ENCODE measurements at regions of chr5 and their contacts with region 1.

Region 1: GRCh38 chr5:157204765-157205164 is 24.1 kb downstream of the ITK start:
- DNase-seq: peak in 1 of 5 donors; percentile 76
- H3K4me3 ChIP-seq: peak overlapping the region; percentile 2
- H3K4me3 Mint-ChIP-seq: peak overlapping the region; percentile 48 to 72 (median 69)
- H3K27ac ChIP-seq: peak overlapping the region; percentile 45
- H3K27ac Mint-ChIP-seq: peak overlapping the region; percentile 78 to 96 (median 87)
- H3K4me1 ChIP-seq: peaks cover 95% of the 10 kb centered on the region
- H3K4me1 Mint-ChIP-seq: peaks cover 71 to 95% (median 94%) of the 10 kb centered on the region in 3 donors
- H3K27me3 ChIP-seq: no peaks in the 10 kb centered on the region
- H3K27me3 Mint-ChIP-seq: peaks cover 0 to 3% of the 10 kb centered on the region in 2 donors

Region 2: GRCh38 chr5:157180374-157181264 is 24.1 kb before region 1 on chr5 and contains the start of gene ITK:
- CTCF ChIA-PET with region 1: interaction called, 4 read pairs
- POLR2A ChIA-PET with region 1: interaction called, 14 read pairs
- DNase-seq: peak in 4 of 5 donors; percentile 25 to 80 (median 73)
- H3K4me3 ChIP-seq: peak within 1 kb of the TSS; percentile 84
- H3K4me3 Mint-ChIP-seq: peak within 1 kb of the TSS; percentile 93 to 100 (median 97)
- H3K27ac ChIP-seq: peak within 1 kb of the TSS; percentile 79
- H3K27ac Mint-ChIP-seq: peak within 1 kb of the TSS; percentile 87 to 99 (median 97)
- H3K4me1 ChIP-seq: peaks cover 45% of the 10 kb centered on the region
- H3K4me1 Mint-ChIP-seq: peaks cover 54 to 64% (median 55%) of the 10 kb centered on the region in 3 donors
- H3K27me3 ChIP-seq: no peaks in the 10 kb centered on the region
- H3K27me3 Mint-ChIP-seq: no peaks in the 10 kb centered on the region
- total RNA-seq, gene ITK: 150 to 162 TPM

Region 3: DNA sequence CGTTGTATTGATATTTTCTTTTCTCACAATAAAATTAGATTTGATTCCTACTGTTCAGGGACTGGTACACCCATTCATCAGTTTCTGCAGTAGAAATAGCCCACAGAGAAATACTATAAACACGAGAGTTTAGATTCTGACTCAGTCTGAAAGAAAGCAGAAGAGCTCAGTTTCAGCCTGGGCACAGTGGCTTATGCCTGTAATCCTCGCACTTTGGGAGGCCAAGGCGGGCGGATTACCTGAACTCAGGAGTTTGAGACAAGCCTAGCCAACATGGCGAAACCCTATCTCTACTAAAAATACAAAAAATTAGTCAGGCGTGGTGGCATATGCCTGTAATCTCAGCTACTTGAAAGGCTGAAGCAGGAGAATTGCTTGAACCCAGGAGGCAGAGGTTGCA is 15.5 kb before region 1 on chr5:
- CTCF ChIA-PET with region 1: interaction called, 11 read pairs
- POLR2A ChIA-PET with region 1: interaction called, 27 read pairs
- DNase-seq: no peak
- H3K4me3 ChIP-seq: peak overlapping the region; percentile 44
- H3K4me3 Mint-ChIP-seq: peak overlapping the region; percentile 84 to 100 (median 97)
- H3K27ac ChIP-seq: no peak overlapping the region
- H3K27ac Mint-ChIP-seq: peak overlapping the region; percentile 79 to 97 (median 92)
- H3K4me1 ChIP-seq: peaks cover 88% of the 10 kb centered on the region
- H3K4me1 Mint-ChIP-seq: peaks cover 86 to 96% (median 92%) of the 10 kb centered on the region in 3 donors
- H3K27me3 ChIP-seq: no peaks in the 10 kb centered on the region
- H3K27me3 Mint-ChIP-seq: no peaks in the 10 kb centered on the region

Region 4: DNA sequence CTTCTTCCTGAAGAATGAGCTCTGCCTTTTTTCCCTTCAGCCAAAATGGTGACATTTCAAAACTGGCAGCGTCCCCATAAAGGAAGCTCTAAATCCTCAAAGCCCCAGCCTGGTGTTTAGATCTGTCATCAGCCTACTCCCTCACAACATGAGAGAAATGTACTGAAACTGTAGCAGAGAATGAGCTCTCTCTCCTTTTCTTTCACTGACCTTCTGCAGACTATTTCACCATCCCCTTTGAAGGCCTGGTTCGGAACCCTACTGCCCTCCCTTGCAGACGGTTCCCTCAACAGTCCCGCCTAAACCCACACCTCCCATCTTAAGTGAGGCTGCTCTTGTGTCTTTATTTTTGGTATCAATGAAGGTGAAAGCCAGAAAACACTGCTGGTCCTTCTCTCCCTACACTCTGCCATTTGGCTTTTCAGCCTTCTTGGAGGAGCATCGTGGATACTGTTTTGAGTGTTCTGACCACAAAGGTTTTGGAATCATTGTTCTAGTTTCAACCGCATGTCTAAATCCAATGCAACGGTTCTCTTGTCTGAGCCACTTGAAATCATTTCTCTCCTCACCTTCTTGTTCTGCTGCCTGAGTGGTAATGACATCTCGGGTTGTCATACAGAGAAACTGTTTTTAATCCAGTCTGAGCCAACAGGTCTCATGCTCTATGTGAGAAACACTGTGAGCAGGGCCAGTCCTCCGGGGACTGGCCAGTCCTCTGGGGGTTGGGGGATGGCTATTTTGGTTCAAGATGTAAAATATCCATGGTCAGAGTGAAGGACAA is 14.9 kb after region 1 on chr5:
- CTCF ChIA-PET with region 1: interaction called, 11 read pairs
- POLR2A ChIA-PET with region 1: interaction called, 23 read pairs
- DNase-seq: no peak
- H3K4me3 ChIP-seq: no peak overlapping the region
- H3K4me3 Mint-ChIP-seq: peak overlapping the region in 6 of 7 donors; percentile 24 to 67 (median 44)
- H3K27ac ChIP-seq: no peak overlapping the region
- H3K27ac Mint-ChIP-seq: peak overlapping the region; percentile 79 to 94 (median 87)
- H3K4me1 ChIP-seq: peaks cover 95% of the 10 kb centered on the region
- H3K4me1 Mint-ChIP-seq: peaks cover 81 to 96% (median 92%) of the 10 kb centered on the region in 3 donors
- H3K27me3 ChIP-seq: no peaks in the 10 kb centered on the region
- H3K27me3 Mint-ChIP-seq: no peaks in the 10 kb centered on the region

Region 5: GRCh38 chr5:157279605-157280239 is 75.0 kb after region 1 on chr5:
- CTCF ChIA-PET with region 1: no interaction called
- POLR2A ChIA-PET with region 1: no interaction called
- DNase-seq: no peak
- H3K4me3 ChIP-seq: no peak overlapping the region
- H3K4me3 Mint-ChIP-seq: peak overlapping the region in 4 of 7 donors; percentile 11 to 47 (median 34)
- H3K27ac ChIP-seq: no peak overlapping the region
- H3K27ac Mint-ChIP-seq: peak overlapping the region in 7 of 8 donors; percentile 49 to 92 (median 71)
- H3K4me1 ChIP-seq: peaks cover 94% of the 10 kb centered on the region
- H3K4me1 Mint-ChIP-seq: peaks cover 89 to 97% (median 94%) of the 10 kb centered on the region in 3 donors
- H3K27me3 ChIP-seq: no peaks in the 10 kb centered on the region
- H3K27me3 Mint-ChIP-seq: no peaks in the 10 kb centered on the region